ENCODE measurements at regions of chr1 and their contacts with region 1.

Region 1: DNA sequence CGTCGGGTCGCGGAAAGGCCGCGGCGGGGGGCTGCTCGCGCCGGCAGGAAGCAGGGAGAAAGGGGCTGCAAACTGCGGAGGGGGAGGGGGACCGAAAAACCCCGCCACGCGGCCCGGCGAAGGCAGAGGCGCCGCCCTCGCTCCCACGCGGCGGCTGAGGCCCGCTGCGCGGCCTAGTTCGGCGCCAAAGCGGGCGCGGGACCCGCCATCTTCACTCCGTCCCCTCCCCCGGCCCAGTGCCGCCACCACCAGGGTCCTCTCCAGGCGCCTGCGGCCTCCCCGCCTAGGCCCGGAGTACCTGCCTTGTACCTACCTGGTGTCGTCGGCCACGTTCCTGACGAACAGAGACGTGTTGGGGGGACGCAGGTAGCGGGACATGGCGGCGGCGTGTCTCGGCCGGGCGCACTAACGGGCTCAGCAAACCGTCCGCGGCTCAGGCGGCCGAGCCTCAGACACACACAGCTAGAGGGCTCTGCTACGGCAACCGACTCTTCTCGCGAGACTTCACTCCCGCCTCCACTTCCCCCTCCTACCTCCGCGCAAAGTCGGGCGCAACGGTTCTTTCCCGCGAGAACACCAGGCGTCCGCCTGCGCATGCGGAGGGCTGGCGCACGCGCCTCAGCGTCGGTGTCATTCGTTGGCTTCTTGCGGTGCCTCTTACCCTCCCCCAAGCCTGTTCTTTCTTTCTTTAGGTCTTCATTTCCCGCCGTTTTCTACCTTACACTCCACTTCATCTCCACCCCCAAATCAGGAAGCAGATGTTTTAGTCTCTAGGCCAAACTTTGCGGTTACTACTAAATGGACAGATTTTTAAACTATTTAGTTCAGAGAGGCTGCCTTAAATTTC is at the start of gene SRSF10:
- DNase-seq: peak; percentile 98 to 100 (median 98)
- ATAC-seq: peak; percentile 96
- H3K4me3 ChIP-seq: peak within 1 kb of the TSS; percentile 87
- H3K27ac ChIP-seq: peak within 1 kb of the TSS; percentile 97
- H3K4me1 ChIP-seq: peaks cover 12 to 20% of the 10 kb centered on the region in 2 experiments
- H3K27me3 ChIP-seq: no peaks in the 10 kb centered on the region
- CTCF ChIP-seq: peak; percentile 26 to 60 (median 38); a peak in 5 of 6 replicates
- EP300 ChIP-seq: peak; percentile 43
- POLR2A ChIP-seq: peak; percentile 99
- RAD21 ChIP-seq: 0 out of 4 replicates have a peak, but pooled peaks of 1 of the 2 experiments have one; percentile 17
- polyA plus RNA-seq, gene SRSF10: 191 to 226 TPM

Region 2: GRCh38 chr1:23923592-23924499 is 56.3 kb before region 1 on chr1:
- CTCF ChIA-PET with region 1: no interaction called
- POLR2A ChIA-PET with region 1: no interaction called
- in situ Hi-C with region 1: no loop called
- intact Hi-C with region 1: no loop called
- DNase-seq: peak in 1 of 4 experiments; percentile 10
- ATAC-seq: no peak
- H3K4me3 ChIP-seq: no peak overlapping the region
- H3K27ac ChIP-seq: no peak overlapping the region
- H3K4me1 ChIP-seq: peaks cover 8 to 17% of the 10 kb centered on the region in 2 experiments
- H3K27me3 ChIP-seq: no peaks in the 10 kb centered on the region
- CTCF ChIP-seq: no peak
- EP300 ChIP-seq: no peak
- POLR2A ChIP-seq: no peak
- RAD21 ChIP-seq: no peak

Region 3: DNA sequence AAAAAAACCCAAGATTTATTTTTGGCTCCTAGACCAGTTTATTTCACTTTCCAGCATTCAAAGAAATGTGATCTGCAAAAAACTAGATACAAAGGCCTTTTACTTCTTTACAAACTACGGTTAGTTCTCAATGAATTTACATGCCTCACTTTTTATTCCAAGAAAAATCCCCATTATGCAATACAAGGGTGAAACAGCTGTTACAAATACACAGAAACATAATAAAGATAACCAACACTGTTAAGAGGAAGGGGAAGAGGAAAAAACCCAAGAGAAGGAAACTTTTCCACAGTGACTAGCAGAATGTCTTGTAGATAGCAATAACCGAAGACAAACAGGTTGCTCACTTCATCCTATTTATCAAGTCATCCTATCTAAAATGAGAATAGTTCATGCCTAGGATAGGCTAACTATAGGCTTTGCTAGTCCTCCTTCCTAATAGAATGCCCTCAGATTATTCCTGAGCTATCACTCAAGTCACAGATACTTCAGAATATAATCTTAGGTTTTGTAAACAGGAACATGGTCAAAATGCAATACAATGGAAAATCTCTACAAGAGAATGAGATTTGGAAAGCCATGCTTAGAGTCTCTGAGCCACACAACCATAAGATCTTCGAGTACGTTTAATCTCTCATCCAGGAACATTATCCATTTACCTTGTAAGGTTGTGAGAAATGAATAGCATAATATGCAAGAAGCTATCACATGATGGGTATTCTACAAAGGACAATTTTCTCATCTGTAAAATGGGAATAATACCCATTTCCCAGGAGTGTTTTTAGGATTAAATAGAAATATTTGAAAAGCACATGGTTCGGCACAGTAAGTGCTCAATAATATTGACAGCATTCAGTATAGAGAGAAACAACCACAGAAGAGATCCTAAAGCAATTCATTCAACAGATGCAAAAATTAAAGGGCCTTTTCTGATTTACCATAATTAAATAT is 15.0 kb before region 1 on chr1:
- CTCF ChIA-PET with region 1: no interaction called
- POLR2A ChIA-PET with region 1: interaction called, 82 read pairs
- in situ Hi-C with region 1: no loop called
- intact Hi-C with region 1: no loop called
- DNase-seq: no peak
- ATAC-seq: peak; percentile 33
- H3K4me3 ChIP-seq: no peak overlapping the region
- H3K27ac ChIP-seq: peak overlapping the region; percentile 27; the same call in 1 of the 3 replicates
- H3K4me1 ChIP-seq: peaks cover 0 to 11% of the 10 kb centered on the region in 2 experiments; a peak in 3 of 5 replicates
- H3K27me3 ChIP-seq: no peaks in the 10 kb centered on the region
- CTCF ChIP-seq: no peak
- EP300 ChIP-seq: peak; percentile 42; the same call in 1 of the 2 replicates
- POLR2A ChIP-seq: peak; percentile 50
- RAD21 ChIP-seq: no peak

Measured in K562 (cell line).